ENCODE measurements at regions of chr12 and their contacts with region 1.

Region 1: DNA sequence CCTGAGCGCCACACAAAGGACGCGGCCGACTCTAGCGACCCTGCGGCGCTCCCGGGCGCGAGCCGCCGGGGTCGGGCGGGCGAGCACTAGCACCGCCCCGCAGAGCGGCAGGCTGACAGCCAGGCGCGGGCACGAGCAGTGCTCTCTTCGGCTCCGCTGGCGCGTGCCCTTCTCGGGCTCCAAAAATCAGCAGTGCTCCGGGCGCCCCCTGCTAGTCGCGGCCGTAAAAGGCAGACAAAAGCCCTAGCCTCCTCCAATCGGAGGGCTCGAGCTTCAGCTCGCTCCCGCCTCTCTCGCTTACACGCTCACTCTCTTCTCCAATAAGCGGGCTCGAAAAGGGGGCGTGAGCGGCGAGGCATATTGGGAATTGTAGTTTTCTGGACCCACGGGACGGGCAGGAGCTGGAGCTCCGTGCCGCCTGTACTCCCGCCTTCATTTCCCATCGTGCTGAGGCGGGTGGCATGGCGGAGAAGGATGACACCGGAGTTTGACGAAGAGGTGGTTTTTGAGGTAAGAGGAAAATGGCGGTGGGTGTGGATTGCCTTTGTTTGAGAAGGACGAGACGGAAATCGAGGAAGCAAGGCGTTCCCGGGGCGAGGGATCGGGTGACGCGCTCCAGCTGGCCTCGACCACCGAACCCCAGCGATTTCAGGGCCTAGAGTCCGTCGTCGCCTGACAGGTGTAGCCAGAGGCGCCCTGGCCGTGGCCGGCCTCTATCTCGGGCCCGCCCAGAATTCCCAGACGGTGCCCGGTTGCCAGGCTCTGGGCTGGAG is at the starts of genes FGD6 and VEZT:
- DNase-seq: peak; percentile 99
- H3K4me3 Mint-ChIP-seq: peak within 1 kb of the TSS; percentile 98
- H3K27ac Mint-ChIP-seq: peak within 1 kb of the TSS; percentile 97
- H3K4me1 Mint-ChIP-seq: peaks cover 30% of the 10 kb centered on the region
- H3K27me3 Mint-ChIP-seq: no peaks in the 10 kb centered on the region
- total RNA-seq, gene FGD6: 2.0 TPM
- total RNA-seq, gene VEZT: 41.3 to 42.5 TPM

Region 2: GRCh38 chr12:94149119-94149780 is 1068.3 kb before region 1 on chr12:
- CTCF ChIA-PET with region 1: no interaction called
- intact Hi-C with region 1: loop called (anchors 5 kb)
- DNase-seq: peak; percentile 42
- H3K4me3 Mint-ChIP-seq: peak overlapping the region; percentile 80
- H3K27ac Mint-ChIP-seq: no peak overlapping the region
- H3K4me1 Mint-ChIP-seq: peaks cover 23% of the 10 kb centered on the region
- H3K27me3 Mint-ChIP-seq: peaks cover 9% of the 10 kb centered on the region

Region 3: GRCh38 chr12:95003213-95003920 is 214.2 kb before region 1 on chr12 and contains the start of gene NDUFA12:
- CTCF ChIA-PET with region 1: no interaction called
- intact Hi-C with region 1: loop called (anchors 1 kb)
- DNase-seq: peak; percentile 97
- H3K4me3 Mint-ChIP-seq: peak within 1 kb of the TSS; percentile 89
- H3K27ac Mint-ChIP-seq: peak within 1 kb of the TSS; percentile 86
- H3K4me1 Mint-ChIP-seq: peaks cover 51% of the 10 kb centered on the region
- H3K27me3 Mint-ChIP-seq: no peaks in the 10 kb centered on the region
- total RNA-seq, gene NDUFA12: 147 to 160 TPM

Region 4: GRCh38 chr12:95117178-95117599 is 100.4 kb before region 1 on chr12:
- CTCF ChIA-PET with region 1: interaction called, 10 read pairs
- intact Hi-C with region 1: loop called (anchors 1 kb)
- DNase-seq: peak; percentile 83
- H3K4me3 Mint-ChIP-seq: no peak overlapping the region
- H3K27ac Mint-ChIP-seq: no peak overlapping the region
- H3K4me1 Mint-ChIP-seq: peaks cover 2% of the 10 kb centered on the region
- H3K27me3 Mint-ChIP-seq: no peaks in the 10 kb centered on the region

Region 5: GRCh38 chr12:95473884-95474659 is 256.5 kb after region 1 on chr12 and contains the start of gene METAP2:
- CTCF ChIA-PET with region 1: no interaction called
- intact Hi-C with region 1: loop called (anchors 1 kb)
- DNase-seq: peak; percentile 96
- H3K4me3 Mint-ChIP-seq: peak within 1 kb of the TSS; percentile 96
- H3K27ac Mint-ChIP-seq: peak within 1 kb of the TSS; percentile 98
- H3K4me1 Mint-ChIP-seq: peaks cover 42% of the 10 kb centered on the region
- H3K27me3 Mint-ChIP-seq: no peaks in the 10 kb centered on the region
- total RNA-seq, gene METAP2: 108 to 110 TPM

Region 6: DNA sequence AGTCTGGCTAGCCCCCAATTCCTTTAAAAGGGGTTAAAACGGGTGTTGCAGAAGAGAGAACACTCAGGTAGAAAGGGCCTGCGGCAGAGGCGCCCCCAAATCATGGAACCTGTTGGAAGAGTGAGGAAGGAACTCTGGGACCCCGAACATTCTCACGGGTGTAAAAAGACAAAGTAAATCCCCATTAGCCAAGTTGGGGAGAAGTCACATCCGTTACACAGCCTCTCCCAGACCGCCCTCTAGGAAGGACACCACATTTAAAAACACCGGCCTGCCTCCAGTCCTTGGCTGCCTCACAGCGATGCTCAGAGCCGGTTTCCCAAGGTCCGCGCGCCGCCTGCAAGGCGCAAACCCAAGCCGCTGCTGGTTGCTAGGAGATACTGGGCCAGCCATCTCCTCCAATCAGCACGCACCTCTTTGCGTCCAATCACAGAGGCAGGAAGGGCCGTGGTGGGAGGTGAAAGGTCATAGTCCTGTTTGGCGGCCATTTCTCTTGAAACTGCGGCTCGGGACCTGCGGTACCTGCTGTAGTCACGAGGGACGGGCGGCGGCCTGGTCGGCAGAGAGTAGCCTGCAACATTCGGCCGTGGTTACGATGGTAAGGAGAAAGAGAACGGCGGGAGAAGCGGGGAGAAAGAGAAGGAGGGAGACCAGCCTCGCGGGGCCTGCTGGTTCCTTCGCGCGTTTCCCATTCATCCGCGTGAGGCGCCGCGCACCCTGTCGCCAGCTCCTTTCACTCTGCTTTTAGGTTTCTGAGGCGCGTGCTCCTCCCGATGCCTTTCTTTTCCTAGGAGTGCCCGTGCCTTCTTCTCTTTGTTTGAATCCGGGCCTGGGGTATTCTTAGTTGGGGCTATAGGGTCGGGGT is 641.1 kb after region 1 on chr12 and contains the start of gene SNRPF:
- CTCF ChIA-PET with region 1: no interaction called
- intact Hi-C with region 1: loop called (anchors 1 kb)
- DNase-seq: peak; percentile 97
- H3K4me3 Mint-ChIP-seq: no peak within 1 kb of the TSS
- H3K27ac Mint-ChIP-seq: no peak within 1 kb of the TSS
- H3K4me1 Mint-ChIP-seq: peaks cover 25% of the 10 kb centered on the region
- H3K27me3 Mint-ChIP-seq: peaks cover 3% of the 10 kb centered on the region
- total RNA-seq, gene SNRPF: 57.4 to 59.9 TPM

Measured in activated naive CD4-positive, alpha-beta T cell treated with anti-CD3 and anti-CD28 coated beads for 36 hours (primary cell).